ENCODE measurements at regions of chr6 and their contacts with region 1.

Region 1: GRCh38 chr6:133115946-133116345 is 125.2 kb upstream of the EYA4 start:
- DNase-seq: no peak
- H3K4me3 ChIP-seq: no peak overlapping the region
- H3K27ac ChIP-seq: no peak overlapping the region
- H3K4me1 ChIP-seq: no peaks in the 10 kb centered on the region
- H3K27me3 ChIP-seq: no peaks in the 10 kb centered on the region
- CTCF ChIP-seq: no peak

Region 2: GRCh38 chr6:133129556-133129955 is 13.6 kb after region 1 on chr6:
- intact Hi-C with region 1: loop called (anchors 1 kb)
- DNase-seq: no peak
- H3K4me3 ChIP-seq: no peak overlapping the region
- H3K27ac ChIP-seq: no peak overlapping the region
- H3K4me1 ChIP-seq: no peaks in the 10 kb centered on the region
- H3K27me3 ChIP-seq: no peaks in the 10 kb centered on the region
- CTCF ChIP-seq: no peak

Measured in tibial artery (tissue), 4 donors.